Sciatic nerve (tissue), 2 donors: ENCODE measurements at regions of chr12 and their contacts with region 1.

Region 1: GRCh38 chr12:89524541-89525285 is at the start of gene GALNT4:
- DNase-seq: peak; percentile 92
- ATAC-seq: peak; percentile 94
- total RNA-seq, gene GALNT4: 5.7 TPM

Region 2: GRCh38 chr12:88052686-88053085 is 1472.0 kb before region 1 on chr12:
- intact Hi-C with region 1: no loop called
- DNase-seq: no peak
- ATAC-seq: peak; percentile 52

Region 3: GRCh38 chr12:89019408-89020120 is 505.1 kb before region 1 on chr12:
- intact Hi-C with region 1: loop called (anchors 10 kb)
- DNase-seq: peak; percentile 84
- ATAC-seq: peak; percentile 95

Region 4: GRCh38 chr12:89825591-89826449 is 301.1 kb after region 1 on chr12:
- intact Hi-C with region 1: no loop called
- DNase-seq: no peak
- ATAC-seq: no peak

Region 5: DNA sequence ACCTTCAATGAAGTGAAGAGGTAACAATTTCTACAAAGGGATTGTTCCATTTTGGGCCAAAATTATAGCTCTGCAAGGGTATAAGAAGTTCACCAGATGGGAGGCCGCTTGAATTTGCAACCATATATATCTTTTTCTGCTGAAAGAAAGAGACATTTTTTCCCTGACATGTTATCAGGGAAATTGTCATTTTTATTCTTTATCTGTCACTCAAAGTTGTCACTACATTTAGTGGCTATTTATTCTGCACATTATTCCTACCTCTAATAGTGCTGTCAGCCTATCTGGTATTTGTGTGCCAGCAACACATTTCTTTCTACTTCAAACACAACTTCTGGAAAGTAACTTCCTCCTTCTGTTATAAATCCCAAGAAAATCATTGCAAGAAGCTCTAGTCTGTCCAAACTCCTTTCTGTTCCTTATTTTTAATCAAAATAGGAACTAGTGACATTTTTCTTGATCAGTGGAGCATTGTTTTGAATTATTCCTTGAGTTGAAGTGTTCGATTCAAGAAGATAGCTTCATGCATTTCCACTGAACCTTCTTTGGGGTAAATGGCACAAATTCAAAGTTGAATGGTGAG is 321.9 kb after region 1 on chr12:
- intact Hi-C with region 1: no loop called
- DNase-seq: no peak
- ATAC-seq: no peak